Aorta (tissue), 5 donors: ENCODE measurements at regions of chr6 and their contacts with region 1.

Region 1: GRCh38 chr6:56188429-56188828 is 59.0 kb downstream of the COL21A1 start:
- DNase-seq: no peak
- ATAC-seq: no peak
- H3K4me3 ChIP-seq: peak overlapping the region in 1 of 2 donors; percentile 14
- H3K27ac ChIP-seq: no peak overlapping the region
- H3K4me1 ChIP-seq: no peaks in the 10 kb centered on the region
- H3K27me3 ChIP-seq: no peaks in the 10 kb centered on the region

Region 2: DNA sequence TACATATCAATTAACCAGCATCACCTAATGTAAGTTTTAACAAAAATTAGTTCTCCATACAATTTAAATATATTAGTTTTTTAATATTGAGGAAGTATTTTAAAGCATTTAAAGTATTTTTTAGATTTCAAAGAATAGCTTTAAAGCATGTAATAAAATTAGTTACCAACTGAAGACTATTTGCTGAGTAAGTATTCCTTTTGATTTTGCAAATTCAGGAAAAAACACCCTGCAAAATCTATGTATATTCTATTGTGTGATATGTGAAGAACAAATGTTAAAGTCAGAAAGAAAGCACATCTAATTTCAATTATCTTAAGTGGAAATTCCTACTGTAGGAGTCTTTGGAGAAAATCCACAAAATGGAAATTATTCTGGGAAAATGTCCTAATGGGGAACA is 48.3 kb before region 1 on chr6:
- intact Hi-C with region 1: no loop called
- DNase-seq: no peak
- ATAC-seq: no peak
- H3K4me3 ChIP-seq: no peak overlapping the region
- H3K27ac ChIP-seq: no peak overlapping the region
- H3K4me1 ChIP-seq: peaks cover 0 to 3% of the 10 kb centered on the region in 2 donors
- H3K27me3 ChIP-seq: no peaks in the 10 kb centered on the region

Region 3: DNA sequence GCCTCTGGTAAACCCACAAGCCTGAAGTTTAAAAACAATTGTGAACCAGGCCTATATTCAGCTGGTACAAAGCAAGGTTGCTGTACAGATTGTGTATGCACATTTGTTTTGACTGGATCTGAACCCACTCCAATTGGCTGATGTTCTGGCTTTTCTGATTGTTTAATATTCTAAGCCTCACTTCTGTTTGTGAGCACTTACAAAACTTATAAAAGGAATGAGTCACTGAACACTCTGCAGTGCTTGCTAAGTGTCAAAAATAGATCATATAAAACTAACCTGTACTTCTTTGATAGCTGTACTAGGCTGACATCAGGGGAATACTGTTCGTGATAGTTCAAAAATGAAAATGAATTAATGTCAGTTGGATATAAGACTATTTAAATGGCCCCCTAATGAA is 46.8 kb after region 1 on chr6:
- intact Hi-C with region 1: loop called in 1 of 2 experiments (anchors 10 kb)
- DNase-seq: no peak
- ATAC-seq: peak; percentile 49
- H3K4me3 ChIP-seq: no peak overlapping the region
- H3K27ac ChIP-seq: no peak overlapping the region
- H3K4me1 ChIP-seq: peaks cover 3 to 22% of the 10 kb centered on the region in 2 donors
- H3K27me3 ChIP-seq: no peaks in the 10 kb centered on the region